ENCODE measurements at regions of chr4 and their contacts with region 1.

Region 1: GRCh38 chr4:10237131-10237530 is 120.5 kb upstream of the WDR1 start:
- DNase-seq: no peak
- ATAC-seq: no peak
- H3K4me3 Mint-ChIP-seq: no peak overlapping the region
- H3K27ac Mint-ChIP-seq: no peak overlapping the region
- H3K4me1 Mint-ChIP-seq: no peaks in the 10 kb centered on the region
- H3K27me3 Mint-ChIP-seq: peaks cover 2% of the 10 kb centered on the region

Region 2: GRCh38 chr4:10204401-10205058 is 32.6 kb before region 1 on chr4:
- CTCF ChIA-PET with region 1: interaction called, 4 read pairs
- POLR2A ChIA-PET with region 1: no interaction called
- intact Hi-C with region 1: loop called (anchors 1 kb)
- DNase-seq: no peak
- ATAC-seq: no peak
- H3K4me3 Mint-ChIP-seq: no peak overlapping the region
- H3K27ac Mint-ChIP-seq: no peak overlapping the region
- H3K4me1 Mint-ChIP-seq: no peaks in the 10 kb centered on the region
- H3K27me3 Mint-ChIP-seq: no peaks in the 10 kb centered on the region

Region 3: DNA sequence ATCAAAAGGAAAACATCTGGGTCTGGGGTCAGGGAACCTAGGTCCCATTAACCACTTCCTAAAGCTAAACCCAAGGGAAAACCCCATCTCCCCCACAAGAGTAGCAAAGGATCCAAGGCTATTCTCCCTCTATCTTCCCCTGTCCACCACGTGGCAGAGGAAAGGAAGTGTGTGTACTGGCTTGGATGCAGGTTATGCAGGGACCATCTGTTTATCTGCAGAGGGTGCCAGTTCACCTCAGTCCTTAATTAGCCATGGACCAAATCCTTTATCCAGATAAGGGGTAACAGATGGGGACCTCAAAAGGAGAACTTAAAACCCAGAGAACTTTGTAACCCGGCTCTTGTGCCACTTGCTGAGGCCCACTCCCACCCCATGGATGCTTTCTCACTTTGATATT is 84.8 kb after region 1 on chr4:
- CTCF ChIA-PET with region 1: no interaction called
- POLR2A ChIA-PET with region 1: no interaction called
- intact Hi-C with region 1: no loop called
- DNase-seq: no peak
- ATAC-seq: no peak
- H3K4me3 Mint-ChIP-seq: no peak overlapping the region
- H3K27ac Mint-ChIP-seq: no peak overlapping the region
- H3K4me1 Mint-ChIP-seq: no peaks in the 10 kb centered on the region
- H3K27me3 Mint-ChIP-seq: no peaks in the 10 kb centered on the region

Measured in activated CD4-positive, alpha-beta T cell treated with anti-CD3 and anti-CD28 coated beads for 36 hours (primary cell).